ENCODE measurements at regions of chr19 and their contacts with region 1.

Region 1: GRCh38 chr19:21335721-21336120 is 6.5 kb upstream of the ZNF708 start:
- DNase-seq: no peak
- ATAC-seq: no peak
- H3K4me3 ChIP-seq: no peak overlapping the region
- H3K27ac ChIP-seq: no peak overlapping the region
- H3K4me1 ChIP-seq: no peaks in the 10 kb centered on the region
- H3K27me3 ChIP-seq: no peaks in the 10 kb centered on the region
- CTCF ChIP-seq: no peak

Region 2: GRCh38 chr19:21197590-21198295 is 138.0 kb before region 1 on chr19:
- CTCF ChIA-PET with region 1: no interaction called
- POLR2A ChIA-PET with region 1: no interaction called
- in situ Hi-C with region 1: no loop called
- intact Hi-C with region 1: no loop called
- DNase-seq: no peak
- ATAC-seq: no peak
- H3K4me3 ChIP-seq: no peak overlapping the region
- H3K27ac ChIP-seq: no peak overlapping the region
- H3K4me1 ChIP-seq: no peaks in the 10 kb centered on the region
- H3K27me3 ChIP-seq: no peaks in the 10 kb centered on the region
- CTCF ChIP-seq: no peak

Region 3: DNA sequence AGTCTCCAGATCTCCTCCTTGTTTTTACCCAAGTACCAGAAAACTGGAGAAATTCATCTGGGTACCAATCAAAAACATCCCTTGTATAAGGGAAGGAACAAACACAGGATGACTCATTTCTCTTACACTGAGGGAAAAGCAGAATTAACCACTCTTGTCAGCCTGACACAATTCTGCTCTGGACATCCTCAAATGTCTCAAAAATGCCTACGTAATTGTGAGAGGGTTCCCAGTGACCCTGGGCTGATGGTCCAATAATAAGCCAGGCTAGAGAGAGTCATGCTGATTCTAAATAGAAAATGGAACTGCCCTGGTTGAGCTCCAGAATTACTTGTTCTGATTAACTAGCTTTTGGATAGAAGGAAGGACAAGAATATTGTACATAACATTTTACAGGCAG is 21.0 kb before region 1 on chr19:
- CTCF ChIA-PET with region 1: no interaction called
- POLR2A ChIA-PET with region 1: no interaction called
- in situ Hi-C with region 1: no loop called
- intact Hi-C with region 1: no loop called
- DNase-seq: no peak
- ATAC-seq: no peak
- H3K4me3 ChIP-seq: no peak overlapping the region
- H3K27ac ChIP-seq: no peak overlapping the region
- H3K4me1 ChIP-seq: no peaks in the 10 kb centered on the region
- H3K27me3 ChIP-seq: no peaks in the 10 kb centered on the region
- CTCF ChIP-seq: no peak

Region 4: DNA sequence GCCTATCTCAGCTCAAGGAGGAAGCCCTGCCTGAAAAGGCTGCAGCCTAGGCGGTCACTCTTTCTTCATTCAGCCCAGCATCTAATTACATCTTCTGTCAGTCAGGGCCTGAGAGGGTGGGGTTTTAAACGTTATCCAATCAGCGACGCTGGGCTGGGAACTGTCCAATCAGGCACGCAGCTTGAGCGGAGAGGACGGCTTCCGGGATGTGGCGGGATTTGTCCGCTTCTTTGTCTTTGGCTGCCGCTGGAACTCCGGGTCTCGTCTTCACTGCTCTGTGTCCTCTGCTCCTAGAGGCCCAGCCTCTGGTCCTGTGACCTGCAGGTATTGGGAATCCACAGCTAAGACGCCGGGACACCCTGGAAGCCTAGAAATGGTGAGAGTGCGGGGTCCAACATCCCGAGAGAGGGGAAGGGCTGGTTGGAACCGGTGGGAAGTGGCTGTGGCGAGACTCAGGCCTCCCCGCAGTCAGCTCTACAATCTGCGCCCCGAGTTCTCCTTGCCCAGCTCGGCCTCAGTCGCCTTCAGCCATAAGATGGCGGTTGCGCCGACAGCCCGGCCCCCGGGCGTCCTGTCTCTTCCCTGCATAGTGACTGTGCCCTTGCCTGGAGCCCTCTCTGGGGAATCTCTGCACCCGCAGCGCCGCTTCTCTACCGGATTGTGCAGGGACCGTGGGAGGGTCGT is 23.2 kb after region 1 on chr19 and contains the start of gene ZNF738:
- CTCF ChIA-PET with region 1: no interaction called
- POLR2A ChIA-PET with region 1: interaction called, 11 read pairs
- in situ Hi-C with region 1: no loop called
- intact Hi-C with region 1: no loop called
- DNase-seq: peak; percentile 69
- ATAC-seq: peak; percentile 100
- H3K4me3 ChIP-seq: peak within 1 kb of the TSS; percentile 86 to 88
- H3K27ac ChIP-seq: peak within 1 kb of the TSS; percentile 85
- H3K4me1 ChIP-seq: peaks cover 4% of the 10 kb centered on the region; the same call in 1 of the 2 replicates
- H3K27me3 ChIP-seq: no peaks in the 10 kb centered on the region
- CTCF ChIP-seq: no peak
- total RNA-seq, gene ZNF738: 9.7 TPM

Measured in Panc1 (cell line).